ENCODE measurements at regions of chr17 and their contacts with region 1.

Region 1: DNA sequence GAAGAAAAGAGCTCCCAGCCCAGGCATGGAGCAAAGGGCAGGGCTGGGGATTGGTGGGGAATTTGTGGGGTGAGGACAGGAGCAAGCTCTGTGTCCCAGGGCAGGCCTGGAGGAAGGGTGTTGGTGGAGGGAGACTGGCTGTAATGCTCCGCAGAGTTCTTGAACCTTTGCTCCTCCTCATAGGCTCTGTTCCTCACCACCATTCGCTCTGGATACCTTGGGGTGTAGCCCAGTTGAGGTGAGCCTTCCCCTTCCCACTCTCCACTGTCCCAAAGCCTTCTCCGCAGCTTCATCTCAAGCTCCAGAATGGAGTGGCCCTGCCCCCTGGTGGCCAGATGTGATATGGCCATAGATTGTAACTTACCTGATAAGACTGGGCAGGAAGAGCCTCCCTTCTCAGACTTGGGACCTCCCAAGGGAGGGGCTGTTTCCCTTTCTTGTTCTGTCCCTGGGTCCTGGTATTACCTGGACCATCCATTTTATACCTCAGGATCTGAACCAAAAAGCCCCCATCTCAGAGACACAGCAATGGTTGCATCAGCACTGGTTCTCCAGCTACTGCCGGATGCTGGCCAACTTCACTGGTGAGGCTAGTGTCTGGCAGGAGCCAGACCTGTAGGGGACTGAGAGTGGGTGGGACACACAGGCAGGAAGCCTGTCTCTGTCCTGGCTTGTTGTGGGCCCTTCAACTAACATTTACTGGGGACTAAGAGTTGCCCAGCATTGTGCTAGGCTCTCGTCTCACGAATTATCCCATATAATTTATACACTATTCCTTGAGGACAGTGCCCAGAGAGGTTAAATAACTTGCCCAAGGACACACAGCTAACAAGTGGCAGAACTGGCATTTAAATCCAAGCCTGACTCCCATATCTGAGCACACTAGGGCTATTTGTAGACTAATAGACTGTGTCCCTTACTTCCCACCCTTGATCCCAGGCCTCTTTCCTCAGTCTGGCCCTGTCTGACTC is 19.1 kb upstream of the STAC2 start:
- DNase-seq: peak; percentile 86
- H3K4me3 ChIP-seq: no peak overlapping the region
- H3K27ac ChIP-seq: no peak overlapping the region
- H3K4me1 ChIP-seq: no peaks in the 10 kb centered on the region
- H3K27me3 ChIP-seq: no peaks in the 10 kb centered on the region
- CTCF ChIP-seq: peak; percentile 89 to 94 (median 92)
- POLR2A ChIP-seq: no peak

Region 2: DNA sequence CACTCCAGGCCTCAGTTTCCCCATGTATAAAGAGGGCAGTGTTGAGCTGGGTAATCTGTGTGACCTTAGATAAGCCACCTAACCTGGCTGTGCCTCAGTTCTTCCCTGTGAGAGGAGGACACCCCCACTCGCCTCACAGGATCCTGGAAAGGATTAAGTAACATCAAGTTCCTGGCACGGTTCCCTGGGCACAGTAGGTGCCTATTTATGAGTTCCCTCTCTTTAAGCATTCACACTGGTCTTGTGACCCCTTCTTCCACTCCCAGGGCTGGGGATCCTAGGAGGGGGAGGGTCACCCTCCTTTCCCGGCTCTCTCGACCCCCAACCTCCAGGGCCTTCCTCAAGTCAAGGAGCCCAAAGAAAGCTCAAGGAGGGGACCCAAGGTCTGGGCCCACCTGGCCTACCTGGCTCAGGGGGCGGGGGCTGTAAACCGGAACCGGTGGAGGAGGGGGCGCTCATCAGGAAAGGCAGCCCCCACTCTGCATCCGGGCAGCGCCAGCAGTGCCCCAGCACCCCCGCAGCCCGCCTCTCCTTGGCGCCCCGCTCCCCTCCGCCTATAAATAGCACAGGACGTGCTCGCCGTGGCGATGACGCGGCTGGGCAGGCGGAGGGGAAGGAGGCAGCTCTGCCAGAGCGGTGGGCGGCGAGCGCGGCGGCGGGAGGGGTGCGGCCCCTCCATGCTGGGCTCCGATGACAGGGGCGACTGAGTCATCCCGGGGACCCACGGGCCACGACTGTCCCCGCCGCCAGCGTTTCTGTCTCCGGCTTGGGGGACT is 35.4 kb before region 1 on chr17:
- intact Hi-C with region 1: loop called (anchors 5 kb)
- DNase-seq: peak; percentile 94
- H3K4me3 ChIP-seq: peak overlapping the region; percentile 18 to 28
- H3K27ac ChIP-seq: peak overlapping the region; percentile 59 to 70
- H3K4me1 ChIP-seq: peaks cover 17% of the 10 kb centered on the region
- H3K27me3 ChIP-seq: no peaks in the 10 kb centered on the region
- CTCF ChIP-seq: peak in 1 of 4 experiments; percentile 5
- POLR2A ChIP-seq: peak; percentile 67

Measured in prostate gland (tissue), 2 donors.